ENCODE measurements at regions of chr17 and their contacts with region 1.

Region 1: GRCh38 chr17:61837175-61838051 is 25.9 kb downstream of the BRIP1 start:
- DNase-seq: peak; percentile 17
- ATAC-seq: peak; percentile 86
- H3K4me3 ChIP-seq: no peak overlapping the region
- H3K27ac ChIP-seq: no peak overlapping the region
- H3K4me1 ChIP-seq: no peaks in the 10 kb centered on the region
- H3K27me3 ChIP-seq: no peaks in the 10 kb centered on the region
- CTCF ChIP-seq: peak; percentile 74 to 78 (median 74)
- EP300 ChIP-seq: no peak
- POLR2A ChIP-seq: no peak
- RAD21 ChIP-seq: peak; percentile 91

Region 2: GRCh38 chr17:61412143-61412859 is 425.1 kb before region 1 on chr17:
- CTCF ChIA-PET with region 1: interaction called, 6 read pairs
- POLR2A ChIA-PET with region 1: no interaction called
- RAD21 ChIA-PET with region 1: interaction called, 5 read pairs
- SMC1A ChIA-PET with region 1: interaction called, 3 read pairs
- in situ Hi-C with region 1: loop called (anchors 5 kb)
- intact Hi-C with region 1: loop called (anchors 1 kb)
- DNase-seq: peak; percentile 5
- ATAC-seq: peak; percentile 83
- H3K4me3 ChIP-seq: peak overlapping the region; percentile 54; the same call in 1 of the 2 replicates
- H3K27ac ChIP-seq: no peak overlapping the region
- H3K4me1 ChIP-seq: peaks cover 4% of the 10 kb centered on the region; the same call in 1 of the 2 replicates
- H3K27me3 ChIP-seq: peaks cover 17 to 34% of the 10 kb centered on the region in 2 experiments
- CTCF ChIP-seq: peak; percentile 83 to 94 (median 87)
- EP300 ChIP-seq: no peak
- POLR2A ChIP-seq: no peak
- RAD21 ChIP-seq: peak; percentile 89

Region 3: GRCh38 chr17:61635913-61636432 is 201.4 kb before region 1 on chr17:
- CTCF ChIA-PET with region 1: interaction called, 83 read pairs
- POLR2A ChIA-PET with region 1: interaction called, 3 read pairs
- RAD21 ChIA-PET with region 1: interaction called, 45 read pairs
- SMC1A ChIA-PET with region 1: interaction called, 80 read pairs
- in situ Hi-C with region 1: loop called (anchors 5 kb)
- intact Hi-C with region 1: loop called (anchors 1 kb)
- DNase-seq: peak; percentile 35
- ATAC-seq: peak; percentile 76
- H3K4me3 ChIP-seq: no peak overlapping the region
- H3K27ac ChIP-seq: no peak overlapping the region
- H3K4me1 ChIP-seq: no peaks in the 10 kb centered on the region
- H3K27me3 ChIP-seq: no peaks in the 10 kb centered on the region; a peak in 1 of 4 replicates
- CTCF ChIP-seq: peak; percentile 75 to 83 (median 82)
- EP300 ChIP-seq: no peak
- POLR2A ChIP-seq: no peak
- RAD21 ChIP-seq: peak; percentile 98

Region 4: GRCh38 chr17:61644800-61645774 is 192.3 kb before region 1 on chr17:
- CTCF ChIA-PET with region 1: interaction called, 15 read pairs
- POLR2A ChIA-PET with region 1: no interaction called
- RAD21 ChIA-PET with region 1: interaction called, 4 read pairs
- SMC1A ChIA-PET with region 1: interaction called, 15 read pairs
- in situ Hi-C with region 1: no loop called
- intact Hi-C with region 1: no loop called
- DNase-seq: no peak
- ATAC-seq: no peak
- H3K4me3 ChIP-seq: no peak overlapping the region
- H3K27ac ChIP-seq: no peak overlapping the region
- H3K4me1 ChIP-seq: no peaks in the 10 kb centered on the region
- H3K27me3 ChIP-seq: no peaks in the 10 kb centered on the region
- CTCF ChIP-seq: no peak
- EP300 ChIP-seq: no peak
- POLR2A ChIP-seq: no peak
- RAD21 ChIP-seq: no peak

Region 5: DNA sequence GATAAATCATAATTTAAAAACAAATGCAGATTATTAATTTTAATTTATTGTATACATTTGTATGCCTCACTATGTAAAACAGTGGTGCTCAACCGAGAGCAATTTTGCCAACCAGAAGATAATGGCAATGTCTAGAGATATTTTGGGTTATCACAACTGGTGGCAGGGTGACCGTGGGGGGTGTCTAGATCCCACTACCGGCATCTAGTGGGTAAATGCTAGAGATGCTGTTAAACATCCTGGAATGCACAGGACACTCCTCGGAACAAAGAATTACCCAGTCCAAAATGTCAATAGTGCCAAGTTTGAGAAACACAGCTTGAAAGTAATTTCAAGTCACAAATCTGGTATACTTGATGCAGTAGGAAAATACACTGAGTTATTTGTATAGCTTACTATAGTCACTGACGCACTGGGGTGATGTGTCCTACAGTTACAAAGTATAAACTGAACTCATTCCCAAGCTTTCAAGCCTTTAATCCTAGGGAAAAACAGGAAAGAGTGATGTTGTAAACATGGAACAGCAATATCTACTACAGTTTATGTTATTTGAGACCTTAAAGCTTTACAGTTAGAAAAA is 107.6 kb before region 1 on chr17:
- CTCF ChIA-PET with region 1: interaction called, 7 read pairs
- POLR2A ChIA-PET with region 1: no interaction called
- RAD21 ChIA-PET with region 1: interaction called, 7 read pairs
- SMC1A ChIA-PET with region 1: interaction called, 10 read pairs
- in situ Hi-C with region 1: no loop called
- intact Hi-C with region 1: no loop called
- DNase-seq: no peak
- ATAC-seq: no peak
- H3K4me3 ChIP-seq: no peak overlapping the region
- H3K27ac ChIP-seq: no peak overlapping the region
- H3K4me1 ChIP-seq: no peaks in the 10 kb centered on the region
- H3K27me3 ChIP-seq: no peaks in the 10 kb centered on the region
- CTCF ChIP-seq: no peak
- EP300 ChIP-seq: no peak
- POLR2A ChIP-seq: no peak
- RAD21 ChIP-seq: no peak

Region 6: GRCh38 chr17:61822326-61823285 is 14.8 kb before region 1 on chr17:
- CTCF ChIA-PET with region 1: interaction called, 10 read pairs
- POLR2A ChIA-PET with region 1: no interaction called
- RAD21 ChIA-PET with region 1: interaction called, 3 read pairs
- SMC1A ChIA-PET with region 1: interaction called, 6 read pairs
- in situ Hi-C with region 1: no loop called
- intact Hi-C with region 1: no loop called
- DNase-seq: peak; percentile 21
- ATAC-seq: peak; percentile 85
- H3K4me3 ChIP-seq: no peak overlapping the region
- H3K27ac ChIP-seq: no peak overlapping the region
- H3K4me1 ChIP-seq: no peaks in the 10 kb centered on the region; the same call in 1 of the 2 replicates
- H3K27me3 ChIP-seq: no peaks in the 10 kb centered on the region
- CTCF ChIP-seq: no peak
- EP300 ChIP-seq: no peak
- POLR2A ChIP-seq: no peak
- RAD21 ChIP-seq: no peak